AG04450 (cell line): ENCODE measurements at regions of chr9 and their contacts with region 1.

Region 1: GRCh38 chr9:69412741-69413150 is 87.7 kb downstream of the ENTREP1 start:
- DNase-seq: peak; percentile 30
- H3K4me3 ChIP-seq: peak overlapping the region; percentile 63
- H3K27ac ChIP-seq: no peak overlapping the region
- H3K27me3 ChIP-seq: no peaks in the 10 kb centered on the region
- CTCF ChIP-seq: peak; percentile 88

Region 2: DNA sequence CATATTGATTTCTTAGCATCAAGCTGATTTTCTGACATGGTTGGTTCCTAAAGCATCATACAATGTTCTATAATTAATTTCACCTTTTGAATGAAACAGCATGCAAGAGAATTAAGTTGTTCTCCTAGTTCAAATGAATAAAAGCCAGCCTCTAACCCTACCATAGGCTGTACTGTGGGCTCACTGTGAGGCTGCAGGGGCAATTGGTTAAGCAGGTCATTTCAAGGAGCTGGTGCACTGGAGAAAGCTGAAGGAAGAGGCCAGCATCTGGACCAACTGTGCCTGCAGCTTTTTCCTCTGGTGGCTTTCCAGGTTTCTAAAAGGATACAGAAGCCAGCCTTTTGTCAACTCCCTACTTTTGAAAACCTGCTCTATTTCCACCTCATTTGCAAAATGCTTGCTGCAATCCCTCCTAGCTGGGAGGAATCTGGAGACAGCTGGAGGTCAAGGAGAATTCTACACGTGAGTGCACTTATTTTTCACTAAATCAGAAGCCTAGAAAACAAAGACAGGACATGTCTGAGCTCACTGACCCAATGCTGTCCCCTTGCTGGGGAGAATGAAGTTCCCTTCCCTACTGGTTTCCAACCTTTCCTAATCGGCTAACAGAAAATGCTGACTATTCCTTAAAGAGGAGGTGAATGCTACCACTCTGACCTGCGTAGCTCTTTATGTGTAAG is 100.5 kb after region 1 on chr9:
- CTCF ChIA-PET with region 1: no interaction called
- POLR2A ChIA-PET with region 1: no interaction called
- DNase-seq: no peak
- H3K4me3 ChIP-seq: no peak overlapping the region
- H3K27ac ChIP-seq: no peak overlapping the region
- H3K27me3 ChIP-seq: no peaks in the 10 kb centered on the region
- CTCF ChIP-seq: no peak

Region 3: GRCh38 chr9:69898714-69899209 is 486.0 kb after region 1 on chr9:
- CTCF ChIA-PET with region 1: interaction called, 18 read pairs
- POLR2A ChIA-PET with region 1: no interaction called
- DNase-seq: peak; percentile 36
- H3K4me3 ChIP-seq: no peak overlapping the region
- H3K27ac ChIP-seq: no peak overlapping the region
- H3K27me3 ChIP-seq: no peaks in the 10 kb centered on the region
- CTCF ChIP-seq: no peak